K562 (cell line): ENCODE measurements at regions of chr5 and their contacts with region 1.

Region 1: DNA sequence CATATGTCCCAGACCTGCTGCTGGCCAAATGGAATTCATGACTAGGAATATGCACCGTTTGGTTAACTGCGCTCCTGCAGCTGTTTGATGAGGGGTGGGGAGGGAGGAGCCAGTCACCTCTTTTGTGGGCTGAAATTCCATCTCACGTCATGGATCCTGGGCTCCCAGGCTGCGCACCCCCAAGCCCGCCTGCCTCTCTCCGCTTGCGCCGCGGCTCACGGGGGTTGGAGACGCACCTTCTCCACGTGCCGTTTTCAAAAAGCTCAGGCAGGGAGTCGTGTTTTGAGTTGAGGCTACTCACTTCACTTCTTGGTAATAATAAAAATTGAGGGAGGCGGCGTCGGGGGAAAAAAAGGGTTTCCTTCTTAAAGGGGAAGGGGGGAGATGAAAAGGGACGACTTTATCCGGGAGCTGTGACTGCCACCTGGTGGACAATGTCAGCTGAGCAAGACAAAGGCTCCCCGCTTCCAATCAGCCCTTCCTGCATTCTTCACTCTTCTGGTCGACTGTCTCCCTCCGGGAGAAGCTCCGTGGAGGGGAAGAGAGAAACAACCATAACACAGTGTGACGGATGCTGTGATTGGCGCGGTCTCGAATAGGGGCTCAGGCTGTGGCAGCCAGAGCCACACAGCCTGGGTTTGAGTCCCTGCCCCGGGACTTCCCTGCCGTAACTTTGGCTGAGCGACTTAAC is 15.9 kb upstream of the C5orf47 start:
- DNase-seq: peak; percentile 81 to 89 (median 82)
- ATAC-seq: peak; percentile 82
- H3K4me3 ChIP-seq: peak overlapping the region; percentile 36
- H3K27ac ChIP-seq: no peak overlapping the region; the same call in 1 of the 3 replicates
- H3K4me1 ChIP-seq: peaks cover 28 to 39% of the 10 kb centered on the region in 2 experiments
- H3K27me3 ChIP-seq: peaks cover 0 to under 1% of the 10 kb centered on the region in 2 experiments; a peak in 1 of 5 replicates
- CTCF ChIP-seq: peak; percentile 81 to 91 (median 88)
- EP300 ChIP-seq: no peak
- POLR2A ChIP-seq: no peak
- RAD21 ChIP-seq: peak; percentile 79 to 93

Region 2: GRCh38 chr5:173781814-173782670 is 191.0 kb before region 1 on chr5:
- CTCF ChIA-PET with region 1: no interaction called
- POLR2A ChIA-PET with region 1: no interaction called
- in situ Hi-C with region 1: no loop called
- intact Hi-C with region 1: loop called (anchors 2 kb)
- DNase-seq: peak; percentile 72 to 86 (median 76)
- ATAC-seq: peak; percentile 52
- H3K4me3 ChIP-seq: no peak overlapping the region
- H3K27ac ChIP-seq: peak overlapping the region; percentile 92
- H3K4me1 ChIP-seq: peaks cover 25 to 61% of the 10 kb centered on the region in 2 experiments
- H3K27me3 ChIP-seq: no peaks in the 10 kb centered on the region
- CTCF ChIP-seq: no peak
- EP300 ChIP-seq: peak; percentile 69; the same call in 1 of the 2 replicates
- POLR2A ChIP-seq: no peak
- RAD21 ChIP-seq: no peak

Region 3: DNA sequence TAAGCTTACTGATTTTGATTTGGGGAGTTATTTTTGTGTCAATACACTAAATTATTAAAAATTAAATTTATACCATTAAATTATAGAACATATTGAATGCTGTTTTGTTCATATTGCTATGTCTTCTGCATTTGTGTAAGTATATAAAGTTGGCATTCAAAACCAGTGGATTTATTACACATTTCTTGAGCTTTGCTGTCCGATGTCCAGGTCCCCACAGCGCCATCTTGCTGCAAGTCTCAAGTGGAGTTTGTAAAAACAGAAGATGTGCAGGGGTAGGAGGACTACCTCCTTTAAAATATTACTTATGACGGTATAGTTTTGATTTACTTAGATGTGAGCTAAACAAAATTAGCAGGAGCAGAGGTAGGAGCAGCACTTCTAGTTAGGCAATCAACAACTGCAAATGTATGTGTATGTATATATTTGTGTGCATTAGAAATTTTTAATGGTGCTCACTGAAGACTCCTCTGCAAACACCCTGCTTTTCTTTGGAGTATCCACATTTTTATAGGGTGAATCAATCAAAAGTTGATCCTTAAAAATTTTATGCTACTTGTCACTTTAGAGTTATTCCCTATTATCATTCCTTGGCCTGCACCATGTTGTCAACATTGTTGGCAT is 47.5 kb before region 1 on chr5:
- CTCF ChIA-PET with region 1: no interaction called
- POLR2A ChIA-PET with region 1: no interaction called
- in situ Hi-C with region 1: no loop called
- intact Hi-C with region 1: loop called (anchors 5 kb)
- DNase-seq: peak; percentile 33 to 69 (median 43)
- ATAC-seq: peak; percentile 76
- H3K4me3 ChIP-seq: no peak overlapping the region
- H3K27ac ChIP-seq: peak overlapping the region; percentile 17; the same call in 1 of the 3 replicates
- H3K4me1 ChIP-seq: peaks cover 5 to 24% of the 10 kb centered on the region in 2 experiments; a peak in 4 of 5 replicates
- H3K27me3 ChIP-seq: no peaks in the 10 kb centered on the region
- CTCF ChIP-seq: peak; percentile 66 to 71 (median 70)
- EP300 ChIP-seq: no peak
- POLR2A ChIP-seq: no peak
- RAD21 ChIP-seq: peak; percentile 51 to 69

Region 4: GRCh38 chr5:174284873-174285272 is 311.8 kb after region 1 on chr5:
- CTCF ChIA-PET with region 1: no interaction called
- POLR2A ChIA-PET with region 1: no interaction called
- in situ Hi-C with region 1: no loop called
- intact Hi-C with region 1: no loop called
- DNase-seq: no peak
- ATAC-seq: no peak
- H3K4me3 ChIP-seq: no peak overlapping the region
- H3K27ac ChIP-seq: no peak overlapping the region
- H3K4me1 ChIP-seq: no peaks in the 10 kb centered on the region
- H3K27me3 ChIP-seq: peaks cover 0 to 7% of the 10 kb centered on the region in 2 experiments; a peak in 2 of 5 replicates
- CTCF ChIP-seq: no peak
- EP300 ChIP-seq: no peak
- POLR2A ChIP-seq: no peak
- RAD21 ChIP-seq: no peak